ENCODE measurements at regions of chr12 and their contacts with region 1.

Region 1: GRCh38 chr12:53098982-53099651 is 1.6 kb downstream of the IGFBP6 start:
- DNase-seq: peak; percentile 83
- H3K4me3 ChIP-seq: no peak overlapping the region
- H3K27ac ChIP-seq: peak overlapping the region; percentile 50
- H3K4me1 ChIP-seq: peaks cover 27% of the 10 kb centered on the region
- H3K27me3 ChIP-seq: no peaks in the 10 kb centered on the region
- CTCF ChIP-seq: peak; percentile 94 to 95
- POLR2A ChIP-seq: peak; percentile 53

Region 2: DNA sequence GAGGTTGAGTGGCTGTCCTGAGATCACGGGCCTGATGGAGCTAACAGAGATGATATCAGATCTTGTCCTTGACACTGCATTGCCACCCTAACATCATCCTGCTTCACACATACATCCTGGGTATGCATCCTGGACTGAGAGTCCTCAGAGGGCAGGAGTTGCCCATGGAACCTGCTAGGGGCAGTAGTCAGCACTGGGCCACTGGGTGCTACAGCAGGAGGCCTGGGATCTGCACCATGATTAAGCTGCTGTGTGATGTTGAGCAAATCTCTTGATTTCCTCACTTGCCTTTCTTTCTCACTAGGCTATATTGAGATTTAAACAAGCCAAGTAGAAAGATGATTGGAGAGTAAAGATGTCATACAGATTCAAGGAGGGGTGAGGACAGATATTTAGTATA is 115.0 kb before region 1 on chr12:
- CTCF ChIA-PET with region 1: no interaction called
- POLR2A ChIA-PET with region 1: no interaction called
- dilution Hi-C with region 1: no loop called
- intact Hi-C with region 1: no loop called
- DNase-seq: no peak
- H3K4me3 ChIP-seq: no peak overlapping the region
- H3K27ac ChIP-seq: no peak overlapping the region
- H3K4me1 ChIP-seq: no peaks in the 10 kb centered on the region
- H3K27me3 ChIP-seq: peaks cover 3 to 8% of the 10 kb centered on the region in 2 experiments
- CTCF ChIP-seq: peak in 1 of 2 donors; percentile 6
- POLR2A ChIP-seq: no peak

Region 3: GRCh38 chr12:53047221-53048042 is 51.7 kb before region 1 on chr12:
- CTCF ChIA-PET with region 1: interaction called, 24 read pairs
- POLR2A ChIA-PET with region 1: no interaction called
- dilution Hi-C with region 1: no loop called
- intact Hi-C with region 1: loop called (anchors 5 kb)
- DNase-seq: peak; percentile 32
- H3K4me3 ChIP-seq: peak overlapping the region in 1 of 3 experiments; percentile 56
- H3K27ac ChIP-seq: peak overlapping the region; percentile 26
- H3K4me1 ChIP-seq: peaks cover 52% of the 10 kb centered on the region
- H3K27me3 ChIP-seq: no peaks in the 10 kb centered on the region
- CTCF ChIP-seq: peak in 1 of 2 donors; percentile 3
- POLR2A ChIP-seq: no peak

Region 4: GRCh38 chr12:53071591-53072551 is 27.2 kb before region 1 on chr12:
- CTCF ChIA-PET with region 1: interaction called, 463 read pairs
- POLR2A ChIA-PET with region 1: interaction called, 5 read pairs
- dilution Hi-C with region 1: no loop called
- intact Hi-C with region 1: loop called (anchors 1 kb)
- DNase-seq: peak; percentile 35
- H3K4me3 ChIP-seq: no peak overlapping the region
- H3K27ac ChIP-seq: no peak overlapping the region
- H3K4me1 ChIP-seq: peaks cover 29% of the 10 kb centered on the region
- H3K27me3 ChIP-seq: no peaks in the 10 kb centered on the region
- CTCF ChIP-seq: peak in 1 of 2 donors; percentile 26
- POLR2A ChIP-seq: no peak

Region 5: GRCh38 chr12:53086361-53086760 is 12.8 kb before region 1 on chr12:
- CTCF ChIA-PET with region 1: interaction called, 23 read pairs
- POLR2A ChIA-PET with region 1: no interaction called
- dilution Hi-C with region 1: no loop called
- intact Hi-C with region 1: no loop called
- DNase-seq: no peak
- H3K4me3 ChIP-seq: no peak overlapping the region
- H3K27ac ChIP-seq: no peak overlapping the region
- H3K4me1 ChIP-seq: no peaks in the 10 kb centered on the region
- H3K27me3 ChIP-seq: peaks cover 5 to 9% of the 10 kb centered on the region in 2 experiments
- CTCF ChIP-seq: no peak
- POLR2A ChIP-seq: no peak

Region 6: GRCh38 chr12:53159195-53159839 is 60.2 kb after region 1 on chr12:
- CTCF ChIA-PET with region 1: interaction called, 15 read pairs
- POLR2A ChIA-PET with region 1: no interaction called
- dilution Hi-C with region 1: no loop called
- intact Hi-C with region 1: no loop called
- DNase-seq: peak; percentile 66
- H3K4me3 ChIP-seq: no peak overlapping the region
- H3K27ac ChIP-seq: no peak overlapping the region
- H3K4me1 ChIP-seq: no peaks in the 10 kb centered on the region
- H3K27me3 ChIP-seq: no peaks in the 10 kb centered on the region
- CTCF ChIP-seq: peak; percentile 98 to 99
- POLR2A ChIP-seq: no peak

Region 7: GRCh38 chr12:53200458-53201176 is 101.5 kb after region 1 on chr12:
- CTCF ChIA-PET with region 1: interaction called, 34 read pairs
- POLR2A ChIA-PET with region 1: no interaction called
- dilution Hi-C with region 1: no loop called
- intact Hi-C with region 1: no loop called
- DNase-seq: no peak
- H3K4me3 ChIP-seq: no peak overlapping the region
- H3K27ac ChIP-seq: no peak overlapping the region
- H3K4me1 ChIP-seq: peaks cover 6% of the 10 kb centered on the region
- H3K27me3 ChIP-seq: peaks cover 0 to 2% of the 10 kb centered on the region in 2 experiments
- CTCF ChIP-seq: no peak
- POLR2A ChIP-seq: no peak